Activated CD4-positive, alpha-beta memory T cell treated with anti-CD3 and anti-CD28 coated beads for 36 hours (primary cell): ENCODE measurements at regions of chr7 and their contacts with region 1.

Region 1: DNA sequence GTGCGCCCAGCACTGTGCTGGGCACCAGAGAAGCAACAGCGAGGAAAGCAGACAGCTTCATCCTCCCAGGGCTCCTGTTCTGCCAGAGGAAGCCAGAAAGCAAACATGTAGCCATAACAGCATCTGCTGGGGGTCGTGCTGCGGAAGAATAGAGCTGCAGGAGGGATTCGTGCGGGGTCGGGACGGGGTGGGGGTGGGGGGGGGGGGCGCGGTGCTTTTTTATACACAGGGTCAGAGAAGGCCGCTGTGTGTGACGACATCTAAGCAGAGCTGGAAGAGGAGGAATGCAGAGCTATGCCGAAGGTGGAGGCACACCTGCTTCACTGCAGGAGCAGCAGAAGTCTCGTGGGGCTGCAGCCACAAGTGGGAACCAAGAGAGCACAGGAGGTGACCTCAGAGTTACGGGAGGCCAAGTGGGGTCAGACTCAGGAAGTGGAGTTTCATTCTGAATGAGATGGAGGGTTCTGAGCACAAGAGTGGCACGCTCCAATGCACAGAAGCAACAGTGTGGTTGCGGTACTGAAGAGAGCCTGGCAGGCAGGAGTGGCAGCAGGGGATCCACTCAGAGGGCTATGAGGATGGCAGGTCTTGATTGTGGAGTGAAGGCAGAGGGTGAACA is 11.1 kb downstream of the PKD1L1 start:
- DNase-seq: peak; percentile 78
- H3K4me3 Mint-ChIP-seq: peak overlapping the region; percentile 1
- H3K27ac Mint-ChIP-seq: peak overlapping the region; percentile 75
- H3K4me1 Mint-ChIP-seq: peaks cover 19% of the 10 kb centered on the region
- H3K27me3 Mint-ChIP-seq: no peaks in the 10 kb centered on the region

Region 2: GRCh38 chr7:47885309-47885986 is 51.7 kb before region 1 on chr7:
- CTCF ChIA-PET with region 1: no interaction called
- POLR2A ChIA-PET with region 1: no interaction called
- intact Hi-C with region 1: loop called (anchors 2 kb)
- DNase-seq: peak; percentile 63
- H3K4me3 Mint-ChIP-seq: no peak overlapping the region
- H3K27ac Mint-ChIP-seq: no peak overlapping the region
- H3K4me1 Mint-ChIP-seq: peaks cover 4% of the 10 kb centered on the region
- H3K27me3 Mint-ChIP-seq: no peaks in the 10 kb centered on the region

Region 3: GRCh38 chr7:47979145-47979831 is 42.1 kb after region 1 on chr7 and contains the start of gene HUS1:
- CTCF ChIA-PET with region 1: interaction called, 3 read pairs
- POLR2A ChIA-PET with region 1: no interaction called
- intact Hi-C with region 1: loop called (anchors 5 kb)
- DNase-seq: peak; percentile 96
- H3K4me3 Mint-ChIP-seq: peak within 1 kb of the TSS; percentile 84
- H3K27ac Mint-ChIP-seq: peak within 1 kb of the TSS; percentile 91
- H3K4me1 Mint-ChIP-seq: peaks cover 24% of the 10 kb centered on the region
- H3K27me3 Mint-ChIP-seq: no peaks in the 10 kb centered on the region
- total RNA-seq, gene HUS1: 38.6 to 38.9 TPM